ENCODE measurements at regions of chr5 and their contacts with region 1.

Region 1: DNA sequence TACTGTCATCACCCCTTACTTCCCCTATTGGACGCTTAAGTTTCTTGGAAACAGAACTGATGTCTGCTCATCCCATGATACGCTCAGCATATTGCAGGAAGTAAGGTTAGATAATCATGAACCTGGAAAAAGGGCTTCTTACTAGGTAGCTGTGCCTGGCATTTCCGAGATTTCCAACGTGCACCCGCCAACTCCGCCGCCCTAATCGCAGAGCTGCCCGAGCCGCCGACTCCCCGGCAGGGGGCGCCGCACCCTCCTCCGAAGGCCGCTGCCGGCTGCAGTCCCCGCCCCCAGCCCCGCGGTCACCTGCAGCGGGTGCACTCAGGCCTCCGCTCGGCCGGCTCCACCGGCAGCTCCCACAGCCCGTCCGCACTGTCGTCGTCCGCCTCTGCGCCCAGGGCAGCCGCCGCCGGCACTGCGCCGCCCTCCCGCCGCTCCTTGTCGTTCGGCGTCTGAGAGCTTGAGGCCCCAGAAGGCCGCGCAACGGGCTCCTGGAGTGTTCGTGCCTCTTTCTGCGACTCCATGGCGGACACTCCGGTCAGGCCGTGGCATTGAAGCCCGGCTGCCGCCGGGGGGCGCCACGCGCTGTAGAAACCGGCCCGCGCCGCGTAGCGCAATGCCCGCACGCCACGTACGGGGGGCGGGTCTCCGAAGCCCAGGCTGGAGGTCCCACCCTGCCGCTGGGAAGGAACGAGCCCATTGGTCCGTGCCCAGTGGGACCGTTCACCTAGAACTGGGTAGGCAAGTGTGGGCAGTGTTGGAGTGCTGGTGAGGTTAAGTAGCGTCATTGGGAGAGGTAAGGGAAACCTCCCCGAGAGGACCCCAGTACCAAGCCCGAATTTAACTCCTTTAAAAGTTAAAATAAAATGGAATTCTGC is at the start of gene DTWD2:
- DNase-seq: peak; percentile 96 to 97 (median 97)
- ATAC-seq: peak; percentile 98
- H3K4me3 ChIP-seq: peak within 1 kb of the TSS; percentile 75
- H3K4me1 ChIP-seq: peaks cover 15% of the 10 kb centered on the region
- CTCF ChIP-seq: peak; percentile 92
- total RNA-seq, gene DTWD2: 5.8 to 11.4 (median 9.2) TPM

Region 2: DNA sequence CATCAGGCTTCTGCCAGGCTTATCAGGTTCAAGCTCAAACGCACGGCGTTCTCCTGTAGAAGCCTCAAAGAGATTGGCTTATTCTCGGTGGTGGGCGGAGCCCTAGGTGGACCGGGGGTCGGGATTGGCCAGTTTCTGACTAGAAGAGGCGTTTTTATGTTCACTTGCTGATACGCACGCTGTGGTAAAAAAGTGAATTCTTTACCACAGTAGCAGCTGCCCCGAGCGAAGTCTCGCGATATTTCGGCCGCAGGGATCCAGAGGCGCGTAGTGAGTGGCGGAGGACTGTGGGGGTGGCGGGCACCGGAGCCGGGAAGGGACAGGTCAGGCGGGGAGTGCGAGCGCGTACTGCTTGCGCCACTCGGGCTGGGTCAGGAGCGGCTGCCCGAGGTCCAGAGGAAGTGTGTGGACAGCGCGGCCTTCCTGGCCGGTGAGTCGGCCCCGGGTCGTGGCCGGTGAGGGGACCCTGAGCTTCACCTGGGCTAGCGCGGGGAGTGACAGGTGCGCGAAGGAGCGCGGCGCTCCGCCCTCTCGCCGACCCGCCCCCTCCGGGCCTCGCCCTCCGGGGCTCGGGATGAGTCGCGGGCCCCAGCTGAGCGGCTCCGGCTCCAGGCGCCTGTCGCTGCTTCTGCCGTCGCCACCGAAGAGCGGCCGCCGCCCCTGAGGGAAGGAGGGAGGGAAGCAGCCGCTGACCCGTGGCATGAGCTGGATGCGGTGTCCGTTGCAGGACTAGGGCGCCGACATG is 82.8 kb after region 1 on chr5 and contains the start of gene DMXL1:
- intact Hi-C with region 1: loop called in 1 of 2 experiments (anchors 5 kb)
- DNase-seq: peak; percentile 99 to 100 (median 99)
- ATAC-seq: peak; percentile 92
- H3K4me3 ChIP-seq: peak within 1 kb of the TSS; percentile 58
- H3K4me1 ChIP-seq: peaks cover 11% of the 10 kb centered on the region
- CTCF ChIP-seq: peak; percentile 5
- total RNA-seq, gene DMXL1: 34.7 to 60.0 (median 51.0) TPM

Region 3: DNA sequence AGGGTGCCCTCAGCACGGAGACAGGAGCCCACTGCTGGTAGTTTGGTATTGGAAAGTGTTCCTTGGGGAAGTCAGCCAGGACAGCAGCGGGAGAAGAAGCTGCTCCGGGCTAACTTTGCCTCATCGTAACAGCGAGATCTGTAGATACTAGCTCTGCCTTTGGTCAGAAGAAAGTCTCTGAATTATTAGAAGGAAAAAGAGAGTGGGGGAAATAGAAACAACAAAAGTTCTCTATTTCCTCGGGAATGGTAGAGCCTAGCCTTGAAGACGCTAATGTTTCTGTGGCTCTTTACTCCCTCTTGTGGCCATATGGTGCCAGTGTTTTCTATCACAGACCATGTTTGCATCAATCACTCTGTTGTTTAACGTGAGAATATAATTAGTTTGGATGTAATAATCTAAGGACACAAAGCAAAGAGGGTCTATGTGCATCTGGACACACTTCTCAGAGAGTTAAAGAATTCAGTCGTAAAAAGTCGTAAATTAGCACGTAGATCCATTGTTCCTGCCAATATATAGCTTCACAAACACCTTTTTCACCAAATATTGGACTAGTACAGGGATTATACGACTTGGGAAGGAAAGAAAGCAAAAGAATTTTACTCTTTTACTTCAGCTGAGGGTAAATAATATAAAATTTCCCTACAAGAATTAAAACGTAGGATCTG is 423.8 kb after region 1 on chr5:
- intact Hi-C with region 1: loop called in 1 of 2 experiments (anchors 5 kb)
- DNase-seq: peak in 2 of 3 donors; percentile 54 to 83
- ATAC-seq: peak; percentile 96
- H3K4me3 ChIP-seq: no peak overlapping the region
- H3K4me1 ChIP-seq: peaks cover 6% of the 10 kb centered on the region
- CTCF ChIP-seq: peak; percentile 75